ENCODE measurements at regions of chr3 and their contacts with region 1.

Region 1: GRCh38 chr3:58008140-58009025 is at the start of gene FLNB:
- DNase-seq: peak; percentile 72 to 78 (median 75)
- H3K4me3 ChIP-seq: peak within 1 kb of the TSS; percentile 65 to 100
- H3K4me3 Mint-ChIP-seq: peak within 1 kb of the TSS; percentile 83 to 94 (median 90)
- H3K27ac ChIP-seq: peak within 1 kb of the TSS; percentile 51
- H3K27ac Mint-ChIP-seq: peak within 1 kb of the TSS; percentile 47 to 92 (median 88)
- H3K4me1 ChIP-seq: peaks cover 31% of the 10 kb centered on the region
- H3K4me1 Mint-ChIP-seq: peaks cover 19 to 48% (median 30%) of the 10 kb centered on the region in 4 donors
- H3K27me3 ChIP-seq: no peaks in the 10 kb centered on the region
- H3K27me3 Mint-ChIP-seq: no peaks in the 10 kb centered on the region
- total RNA-seq, gene FLNB: 22.5 to 28.5 TPM

Region 2: GRCh38 chr3:58116161-58116955 is 108.0 kb after region 1 on chr3:
- CTCF ChIA-PET with region 1: interaction called, 3 read pairs
- POLR2A ChIA-PET with region 1: no interaction called
- intact Hi-C with region 1: loop called (anchors 2 kb)
- DNase-seq: peak; percentile 78 to 87 (median 81)
- H3K4me3 ChIP-seq: no peak overlapping the region
- H3K4me3 Mint-ChIP-seq: peak overlapping the region in 7 of 8 donors; percentile 19 to 80 (median 67)
- H3K27ac ChIP-seq: peak overlapping the region; percentile 13
- H3K27ac Mint-ChIP-seq: peak overlapping the region; percentile 85 to 95 (median 94)
- H3K4me1 ChIP-seq: peaks cover 36% of the 10 kb centered on the region
- H3K4me1 Mint-ChIP-seq: peaks cover 20 to 48% (median 36%) of the 10 kb centered on the region in 4 donors
- H3K27me3 ChIP-seq: no peaks in the 10 kb centered on the region
- H3K27me3 Mint-ChIP-seq: no peaks in the 10 kb centered on the region

Region 3: GRCh38 chr3:58167431-58168351 is 159.3 kb after region 1 on chr3:
- CTCF ChIA-PET with region 1: interaction called, 21 read pairs
- POLR2A ChIA-PET with region 1: no interaction called
- intact Hi-C with region 1: no loop called
- DNase-seq: peak; percentile 21 to 51 (median 29)
- H3K4me3 ChIP-seq: no peak overlapping the region
- H3K4me3 Mint-ChIP-seq: no peak overlapping the region
- H3K27ac ChIP-seq: no peak overlapping the region
- H3K27ac Mint-ChIP-seq: peak overlapping the region in 3 of 7 donors; percentile 13 to 43 (median 22)
- H3K4me1 ChIP-seq: no peaks in the 10 kb centered on the region
- H3K4me1 Mint-ChIP-seq: no peaks in the 10 kb centered on the region
- H3K27me3 ChIP-seq: no peaks in the 10 kb centered on the region
- H3K27me3 Mint-ChIP-seq: no peaks in the 10 kb centered on the region

Region 4: DNA sequence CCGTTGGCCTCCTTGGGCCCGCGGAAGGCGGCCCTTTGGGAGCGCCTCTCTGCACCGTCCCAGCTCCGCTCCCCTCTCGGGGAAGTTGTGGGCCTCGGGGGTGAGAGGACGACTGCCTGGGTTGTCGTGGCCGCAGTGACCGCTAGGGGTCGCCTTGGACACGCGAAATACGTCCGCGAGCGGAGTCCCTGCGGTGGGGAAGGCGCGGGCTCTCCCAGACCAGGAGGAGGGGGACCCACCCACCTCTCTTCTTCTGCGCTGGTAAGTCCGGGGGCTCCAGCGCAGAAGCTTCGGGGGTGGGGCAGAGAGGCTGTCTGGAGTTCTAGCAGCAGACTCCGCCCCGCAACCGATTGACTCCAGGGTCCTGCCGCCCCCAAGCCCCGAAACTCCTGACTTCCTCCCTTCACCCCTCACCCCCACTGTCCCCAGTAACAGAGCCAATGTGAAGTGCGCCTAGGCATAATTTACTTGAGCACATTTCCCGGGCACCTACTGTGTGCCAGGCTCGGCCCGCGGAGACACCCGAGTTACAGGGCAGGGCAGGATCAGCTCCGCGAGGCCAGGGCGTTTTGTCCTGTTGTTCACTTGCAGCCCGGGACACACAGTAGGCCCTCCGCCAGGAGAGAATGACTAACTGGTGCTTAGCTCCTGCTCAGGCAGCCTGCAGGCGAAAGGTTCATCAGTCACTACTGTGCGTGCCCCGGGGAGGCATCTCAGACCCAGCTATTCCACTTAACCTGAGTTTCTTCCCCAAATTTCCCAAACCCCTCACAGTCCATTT is 169.6 kb after region 1 on chr3:
- CTCF ChIA-PET with region 1: interaction called, 20 read pairs
- POLR2A ChIA-PET with region 1: no interaction called
- intact Hi-C with region 1: loop called (anchors 1 kb)
- DNase-seq: peak; percentile 78 to 81 (median 79)
- H3K4me3 ChIP-seq: peak overlapping the region in 1 of 2 donors; percentile 38
- H3K4me3 Mint-ChIP-seq: peak overlapping the region; percentile 42 to 81 (median 74)
- H3K27ac ChIP-seq: no peak overlapping the region
- H3K27ac Mint-ChIP-seq: peak overlapping the region in 1 of 7 donors; percentile 25
- H3K4me1 ChIP-seq: peaks cover 17% of the 10 kb centered on the region
- H3K4me1 Mint-ChIP-seq: peaks cover 3 to 17% (median 11%) of the 10 kb centered on the region in 4 donors
- H3K27me3 ChIP-seq: no peaks in the 10 kb centered on the region
- H3K27me3 Mint-ChIP-seq: no peaks in the 10 kb centered on the region

Region 5: DNA sequence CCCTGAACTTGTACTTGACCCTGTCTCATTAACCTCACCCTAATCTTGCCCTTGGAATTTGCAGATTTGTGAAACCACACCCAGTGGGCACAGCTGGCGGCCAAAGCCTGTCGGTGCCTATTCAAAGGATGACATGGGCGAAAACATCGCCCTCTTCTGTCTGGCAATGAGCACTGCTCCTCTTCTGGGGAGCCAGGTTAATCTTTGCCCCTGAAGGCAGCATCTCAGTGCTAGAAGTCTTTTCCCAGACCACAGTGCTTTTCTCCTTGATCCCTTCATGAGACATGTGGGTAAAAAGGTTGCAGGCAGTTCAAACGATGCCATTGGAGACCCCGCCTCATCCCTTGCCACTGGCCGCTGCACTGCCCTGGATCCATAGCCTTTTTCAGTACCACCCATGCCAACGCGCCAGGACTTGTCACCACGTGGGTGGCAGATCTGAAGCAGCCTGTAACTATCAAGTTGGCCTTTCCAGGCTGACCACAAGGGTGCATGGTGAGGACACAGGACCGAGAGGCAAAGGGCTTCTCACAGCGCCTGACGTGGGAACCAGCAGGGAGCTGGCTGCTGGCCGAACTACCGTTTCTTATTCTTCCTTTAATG is 208.9 kb after region 1 on chr3:
- CTCF ChIA-PET with region 1: interaction called, 36 read pairs
- POLR2A ChIA-PET with region 1: no interaction called
- intact Hi-C with region 1: loop called (anchors 1 kb)
- DNase-seq: peak; percentile 47 to 56 (median 50)
- H3K4me3 ChIP-seq: no peak overlapping the region
- H3K4me3 Mint-ChIP-seq: peak overlapping the region in 1 of 8 donors; percentile 61
- H3K27ac ChIP-seq: no peak overlapping the region
- H3K27ac Mint-ChIP-seq: no peak overlapping the region
- H3K4me1 ChIP-seq: peaks cover 6% of the 10 kb centered on the region
- H3K4me1 Mint-ChIP-seq: peaks cover 3 to 9% (median 5%) of the 10 kb centered on the region in 4 donors
- H3K27me3 ChIP-seq: no peaks in the 10 kb centered on the region
- H3K27me3 Mint-ChIP-seq: peaks cover 0 to 2% of the 10 kb centered on the region in 2 donors

Region 6: GRCh38 chr3:58433400-58434169 is 425.2 kb after region 1 on chr3 and contains the start of gene PDHB:
- CTCF ChIA-PET with region 1: no interaction called
- POLR2A ChIA-PET with region 1: no interaction called
- intact Hi-C with region 1: loop called (anchors 10 kb)
- DNase-seq: peak; percentile 86 to 91 (median 89)
- H3K4me3 ChIP-seq: peak within 1 kb of the TSS; percentile 69 to 82
- H3K4me3 Mint-ChIP-seq: peak within 1 kb of the TSS; percentile 91 to 94 (median 92)
- H3K27ac ChIP-seq: peak within 1 kb of the TSS; percentile 77
- H3K27ac Mint-ChIP-seq: peak within 1 kb of the TSS; percentile 88 to 98 (median 91)
- H3K4me1 ChIP-seq: peaks cover 25% of the 10 kb centered on the region
- H3K4me1 Mint-ChIP-seq: peaks cover 16 to 36% (median 25%) of the 10 kb centered on the region in 4 donors
- H3K27me3 ChIP-seq: no peaks in the 10 kb centered on the region
- H3K27me3 Mint-ChIP-seq: no peaks in the 10 kb centered on the region
- total RNA-seq, gene PDHB: 55.0 to 58.6 TPM

Measured in CD4-positive, alpha-beta memory T cell (primary cell).